ENCODE measurements at regions of chr14 and their contacts with region 1.

Region 1: DNA sequence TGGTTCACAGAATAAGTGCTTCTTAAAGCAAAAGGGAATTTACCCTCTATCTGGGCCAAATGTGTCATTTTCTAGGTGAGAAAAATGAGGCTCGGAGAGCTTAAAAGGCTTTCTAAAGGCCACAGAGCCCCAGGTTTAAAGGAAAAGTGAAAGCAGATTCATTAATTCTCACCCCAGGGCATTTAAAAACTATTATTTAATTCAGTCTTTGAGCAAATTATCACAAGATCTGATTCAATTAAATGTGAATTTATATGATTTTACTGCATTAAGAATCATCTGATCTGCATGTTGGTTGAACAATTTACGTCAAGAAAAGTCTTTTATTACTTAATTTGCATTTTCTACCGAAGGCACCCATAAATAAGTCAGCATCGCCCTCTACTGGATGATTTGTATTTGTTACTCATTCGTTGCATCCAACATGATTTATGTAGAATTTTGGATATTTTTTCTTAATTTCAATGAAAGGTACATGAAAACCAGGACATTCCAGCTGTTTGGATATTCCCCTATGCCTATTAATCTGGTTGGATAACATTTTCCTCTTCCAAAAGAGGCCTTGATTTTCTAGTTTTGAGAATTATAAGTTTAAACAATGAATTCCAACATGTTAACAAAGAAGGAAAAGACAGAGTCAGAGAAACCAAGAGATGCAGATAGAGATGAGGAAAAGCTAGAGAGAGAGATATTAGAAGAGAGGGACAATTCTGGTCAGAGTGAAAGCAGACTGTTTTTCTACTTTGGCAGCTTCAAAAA is 19.1 kb upstream of the DHRS7 start:
- DNase-seq: peak; percentile 59 to 78 (median 74)
- H3K4me3 ChIP-seq: peak overlapping the region; percentile 21 to 42
- H3K4me3 Mint-ChIP-seq: peak overlapping the region; percentile 72 to 86 (median 84)
- H3K27ac ChIP-seq: peak overlapping the region; percentile 58
- H3K27ac Mint-ChIP-seq: peak overlapping the region; percentile 84 to 96 (median 88)
- H3K4me1 ChIP-seq: peaks cover 8% of the 10 kb centered on the region
- H3K4me1 Mint-ChIP-seq: peaks cover 7 to 13% (median 8%) of the 10 kb centered on the region in 4 donors
- H3K27me3 ChIP-seq: no peaks in the 10 kb centered on the region
- H3K27me3 Mint-ChIP-seq: no peaks in the 10 kb centered on the region

Region 2: GRCh38 chr14:59126710-59127432 is 1057.5 kb before region 1 on chr14:
- CTCF ChIA-PET with region 1: interaction called, 3 read pairs
- POLR2A ChIA-PET with region 1: no interaction called
- intact Hi-C with region 1: loop called (anchors 1 kb)
- DNase-seq: peak in 4 of 5 donors; percentile 55 to 62 (median 61)
- H3K4me3 ChIP-seq: no peak overlapping the region
- H3K4me3 Mint-ChIP-seq: no peak overlapping the region
- H3K27ac ChIP-seq: no peak overlapping the region
- H3K27ac Mint-ChIP-seq: no peak overlapping the region
- H3K4me1 ChIP-seq: no peaks in the 10 kb centered on the region
- H3K4me1 Mint-ChIP-seq: peaks cover 0 to 3% (median 0%) of the 10 kb centered on the region in 4 donors
- H3K27me3 ChIP-seq: no peaks in the 10 kb centered on the region
- H3K27me3 Mint-ChIP-seq: peaks cover 13 to 19% of the 10 kb centered on the region in 2 donors

Region 3: DNA sequence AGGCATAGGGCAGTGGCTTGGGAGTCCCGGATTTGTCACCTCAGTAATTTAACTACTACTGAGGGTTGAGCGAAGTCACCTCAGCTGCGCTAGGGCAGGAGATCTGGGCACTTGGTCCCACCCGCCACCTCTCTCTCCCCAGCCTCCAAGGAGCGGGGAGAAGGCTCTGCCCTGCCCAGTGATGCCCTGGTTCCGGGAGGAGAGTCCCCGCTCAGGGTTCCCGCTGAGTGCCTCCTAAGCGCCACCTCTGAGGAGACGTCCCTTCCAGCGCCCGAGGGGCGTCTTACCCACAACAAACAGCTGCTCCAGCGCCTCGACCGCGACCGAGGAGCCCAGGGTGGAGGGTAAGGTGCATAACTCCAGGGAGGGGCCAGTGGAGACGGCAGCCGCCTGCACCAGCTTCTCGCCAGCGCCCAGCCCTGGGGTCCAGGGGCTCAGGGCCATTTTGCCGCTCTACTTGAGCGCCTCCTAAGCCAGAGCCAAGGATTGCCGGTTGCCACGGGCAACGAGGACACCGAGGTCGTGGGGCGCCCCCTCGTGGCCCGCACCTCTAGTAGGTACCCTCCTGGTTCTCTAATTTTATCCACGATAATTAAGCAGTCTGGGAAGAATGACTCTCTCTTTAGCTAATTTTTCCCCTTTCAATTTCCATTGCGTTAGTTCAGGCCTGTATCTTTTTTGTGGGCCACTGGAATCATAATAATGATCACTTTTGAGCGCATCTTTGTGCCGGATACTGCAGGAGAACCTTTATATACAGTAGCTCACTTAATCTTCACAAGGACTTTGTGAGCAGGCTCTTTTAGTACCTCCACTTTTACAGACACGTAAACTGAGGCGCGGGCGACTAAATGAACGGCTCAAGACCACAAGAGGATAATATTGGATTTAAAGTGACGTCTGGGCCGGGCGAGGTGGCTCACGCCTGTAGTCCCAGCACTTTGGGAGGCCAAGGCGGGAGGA is 607.7 kb before region 1 on chr14 and contains the start of gene CCDC175:
- CTCF ChIA-PET with region 1: no interaction called
- POLR2A ChIA-PET with region 1: no interaction called
- intact Hi-C with region 1: loop called (anchors 1 kb)
- DNase-seq: peak; percentile 76 to 84 (median 80)
- H3K4me3 ChIP-seq: peak within 1 kb of the TSS; percentile 63 to 69
- H3K4me3 Mint-ChIP-seq: peak within 1 kb of the TSS; percentile 76 to 88 (median 82)
- H3K27ac ChIP-seq: no peak within 1 kb of the TSS
- H3K27ac Mint-ChIP-seq: peak within 1 kb of the TSS in 6 of 7 donors; percentile 0 to 91 (median 42)
- H3K4me1 ChIP-seq: peaks cover 10% of the 10 kb centered on the region
- H3K4me1 Mint-ChIP-seq: peaks cover 5 to 11% (median 6%) of the 10 kb centered on the region in 4 donors
- H3K27me3 ChIP-seq: no peaks in the 10 kb centered on the region
- H3K27me3 Mint-ChIP-seq: peaks cover 3 to 4% of the 10 kb centered on the region in 2 donors
- total RNA-seq, gene CCDC175: not detected

Region 4: DNA sequence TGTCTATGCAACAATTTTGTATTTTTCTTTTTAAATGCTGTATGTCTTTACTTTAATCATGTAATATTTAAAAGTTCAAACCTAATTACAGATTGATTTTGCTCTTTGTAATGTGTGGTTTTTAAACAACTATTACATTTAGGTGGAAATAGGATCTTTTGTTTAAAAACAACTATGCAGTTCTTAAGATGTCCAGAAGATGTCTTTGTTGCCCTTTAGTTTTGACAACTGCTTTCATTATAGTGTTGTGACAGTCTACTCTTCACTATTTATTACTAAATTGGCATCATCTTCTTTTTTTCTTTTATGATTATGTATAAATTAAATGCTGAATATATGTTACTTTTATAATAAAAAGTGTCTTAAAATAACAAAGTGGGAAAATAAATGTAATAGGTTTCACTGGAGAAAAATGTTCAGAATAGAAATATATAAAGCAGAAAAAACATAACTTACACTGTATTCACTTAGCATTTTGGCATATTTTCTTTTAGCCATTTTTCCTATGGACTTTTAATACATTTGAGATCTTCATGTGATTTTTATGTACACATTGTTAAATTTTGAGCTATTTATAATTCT is 119.7 kb before region 1 on chr14:
- CTCF ChIA-PET with region 1: interaction called, 120 read pairs
- POLR2A ChIA-PET with region 1: no interaction called
- intact Hi-C with region 1: loop called (anchors 1 kb)
- DNase-seq: peak in 4 of 5 donors; percentile 27 to 44 (median 39)
- H3K4me3 ChIP-seq: no peak overlapping the region
- H3K4me3 Mint-ChIP-seq: no peak overlapping the region
- H3K27ac ChIP-seq: no peak overlapping the region
- H3K27ac Mint-ChIP-seq: no peak overlapping the region
- H3K4me1 ChIP-seq: no peaks in the 10 kb centered on the region
- H3K4me1 Mint-ChIP-seq: no peaks in the 10 kb centered on the region
- H3K27me3 ChIP-seq: no peaks in the 10 kb centered on the region
- H3K27me3 Mint-ChIP-seq: peaks cover 0 to 14% of the 10 kb centered on the region in 2 donors

Region 5: DNA sequence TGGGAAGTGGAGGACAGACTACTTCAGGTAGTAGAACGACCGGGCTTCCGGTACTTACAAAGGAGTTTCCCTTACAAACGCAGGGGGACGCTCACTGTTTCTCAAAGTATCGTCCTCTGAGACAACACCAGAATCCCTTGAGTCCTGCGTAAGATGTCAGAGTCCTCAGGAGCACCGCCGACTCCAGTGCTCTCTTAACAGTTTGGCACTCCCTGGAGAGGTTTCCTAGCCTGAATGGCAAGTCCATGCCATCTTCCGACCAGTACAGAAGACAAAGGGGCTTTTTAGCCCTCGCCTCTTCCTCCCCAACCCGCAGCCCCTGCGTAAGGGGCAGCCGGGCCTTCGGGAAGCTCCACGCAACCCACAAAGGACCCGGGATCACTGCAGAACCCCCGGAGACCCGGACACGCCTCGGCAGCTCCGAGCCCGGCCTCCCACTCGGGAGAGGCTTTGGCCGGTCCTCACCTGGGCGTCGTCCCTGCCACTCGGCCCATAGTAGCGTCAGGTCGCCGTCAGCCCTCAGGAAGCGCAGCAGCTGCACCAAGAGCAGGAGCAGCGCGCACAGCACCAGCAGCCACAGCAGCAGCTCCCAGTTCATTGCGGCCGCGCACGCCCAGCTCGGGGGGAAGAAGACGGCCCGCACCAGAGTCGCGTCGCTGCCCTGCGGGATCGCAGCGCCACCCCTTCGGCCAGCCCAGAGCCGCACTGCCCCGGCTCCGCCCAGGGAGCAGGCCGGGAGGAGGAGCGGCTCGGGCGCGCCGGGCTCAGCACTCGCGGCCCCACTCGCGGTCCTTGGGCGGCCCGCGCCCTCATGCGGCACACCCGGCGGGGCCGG is 19.4 kb before region 1 on chr14 and contains the start of gene DHRS7:
- CTCF ChIA-PET with region 1: interaction called, 102 read pairs
- POLR2A ChIA-PET with region 1: interaction called, 40 read pairs
- intact Hi-C with region 1: loop called (anchors 1 kb)
- DNase-seq: peak; percentile 61 to 74 (median 65)
- H3K4me3 ChIP-seq: peak within 1 kb of the TSS; percentile 74 to 76
- H3K4me3 Mint-ChIP-seq: peak within 1 kb of the TSS; percentile 96 to 99 (median 99)
- H3K27ac ChIP-seq: peak within 1 kb of the TSS; percentile 82
- H3K27ac Mint-ChIP-seq: peak within 1 kb of the TSS; percentile 97 to 99 (median 99)
- H3K4me1 ChIP-seq: peaks cover 53% of the 10 kb centered on the region
- H3K4me1 Mint-ChIP-seq: peaks cover 36 to 56% (median 47%) of the 10 kb centered on the region in 4 donors
- H3K27me3 ChIP-seq: no peaks in the 10 kb centered on the region
- H3K27me3 Mint-ChIP-seq: no peaks in the 10 kb centered on the region
- total RNA-seq, gene DHRS7: 63.5 to 69.6 TPM

Region 6: GRCh38 chr14:60206837-60207533 is 22.7 kb after region 1 on chr14:
- CTCF ChIA-PET with region 1: no interaction called
- POLR2A ChIA-PET with region 1: no interaction called
- intact Hi-C with region 1: no loop called
- DNase-seq: no peak
- H3K4me3 ChIP-seq: no peak overlapping the region
- H3K4me3 Mint-ChIP-seq: no peak overlapping the region
- H3K27ac ChIP-seq: no peak overlapping the region
- H3K27ac Mint-ChIP-seq: peak overlapping the region in 1 of 7 donors; percentile 3
- H3K4me1 ChIP-seq: no peaks in the 10 kb centered on the region
- H3K4me1 Mint-ChIP-seq: no peaks in the 10 kb centered on the region
- H3K27me3 ChIP-seq: no peaks in the 10 kb centered on the region
- H3K27me3 Mint-ChIP-seq: peaks cover 24% of the 10 kb centered on the region in 2 donors

Region 7: DNA sequence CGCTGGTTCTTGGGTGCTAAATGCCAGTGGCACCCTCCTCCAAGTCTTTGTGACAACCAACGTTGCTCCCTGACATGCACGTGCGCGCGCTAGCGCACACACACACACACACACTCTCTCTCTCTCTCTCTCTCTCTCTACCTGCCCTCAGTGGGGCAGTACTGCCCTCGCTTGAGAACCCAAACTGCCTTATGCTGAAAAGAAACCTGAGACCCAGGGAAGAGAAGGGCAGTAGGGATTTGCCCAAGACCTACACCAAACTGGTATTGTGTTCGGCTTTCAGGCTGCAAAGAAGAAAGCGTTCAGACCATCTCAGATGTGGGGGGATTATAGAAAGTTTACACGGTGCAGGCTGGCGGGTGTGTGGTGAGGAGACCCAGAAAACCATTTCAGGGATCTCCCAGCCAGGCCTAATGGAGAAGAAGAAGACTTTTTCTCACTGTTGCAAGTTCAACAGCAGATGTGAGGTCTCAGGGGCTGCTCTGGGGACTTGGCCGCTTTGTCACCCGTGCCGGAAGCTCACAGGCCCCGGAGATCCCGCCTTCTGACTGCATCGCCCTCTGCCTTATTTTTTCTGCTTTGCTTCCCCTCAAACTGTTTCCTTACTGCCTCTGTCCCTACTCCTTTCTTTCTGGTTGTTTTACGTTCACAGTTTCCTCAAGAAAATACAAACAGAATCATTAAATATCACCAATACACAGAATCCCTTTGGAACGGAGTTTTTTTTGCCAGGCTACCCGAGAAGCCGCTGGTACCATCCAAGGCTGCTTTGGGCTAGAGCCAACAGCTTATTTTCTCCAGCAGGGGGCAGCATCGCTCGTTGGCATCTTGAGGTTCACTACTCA is 147.1 kb after region 1 on chr14:
- CTCF ChIA-PET with region 1: interaction called, 10 read pairs
- POLR2A ChIA-PET with region 1: no interaction called
- intact Hi-C with region 1: no loop called
- DNase-seq: peak; percentile 70 to 77 (median 75)
- H3K4me3 ChIP-seq: peak overlapping the region; percentile 58 to 84
- H3K4me3 Mint-ChIP-seq: peak overlapping the region; percentile 93 to 100 (median 98)
- H3K27ac ChIP-seq: peak overlapping the region; percentile 33
- H3K27ac Mint-ChIP-seq: peak overlapping the region; percentile 75 to 98 (median 95)
- H3K4me1 ChIP-seq: peaks cover 21% of the 10 kb centered on the region
- H3K4me1 Mint-ChIP-seq: peaks cover 19 to 33% (median 26%) of the 10 kb centered on the region in 4 donors
- H3K27me3 ChIP-seq: no peaks in the 10 kb centered on the region
- H3K27me3 Mint-ChIP-seq: peaks cover 9 to 42% of the 10 kb centered on the region in 2 donors

Measured in CD4-positive, alpha-beta memory T cell (primary cell).